Right ventricle myocardium inferior (tissue), 1 donor: ENCODE measurements at regions of chr5 and their contacts with region 1.

Region 1: DNA sequence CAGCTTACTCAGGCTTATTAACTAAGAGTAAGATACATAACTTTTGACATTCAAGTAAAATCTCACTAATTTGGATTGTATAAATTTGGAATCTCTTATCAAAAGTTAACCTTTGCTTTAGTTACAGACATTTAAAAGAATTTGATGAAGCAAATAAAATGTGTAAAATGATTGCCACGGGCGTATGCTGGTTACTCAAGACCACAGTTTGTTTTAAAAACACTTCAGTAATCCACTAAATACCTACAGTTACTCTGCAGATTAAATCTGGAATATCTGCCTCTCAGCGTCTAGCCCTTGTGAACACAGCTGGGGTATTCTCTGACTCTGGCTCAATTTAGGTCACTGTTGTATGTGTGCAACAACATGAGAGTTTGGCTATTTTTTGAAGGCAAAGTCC is 143.8 kb downstream of the MCTP1 start:
- DNase-seq: no peak
- ATAC-seq: no peak

Region 2: DNA sequence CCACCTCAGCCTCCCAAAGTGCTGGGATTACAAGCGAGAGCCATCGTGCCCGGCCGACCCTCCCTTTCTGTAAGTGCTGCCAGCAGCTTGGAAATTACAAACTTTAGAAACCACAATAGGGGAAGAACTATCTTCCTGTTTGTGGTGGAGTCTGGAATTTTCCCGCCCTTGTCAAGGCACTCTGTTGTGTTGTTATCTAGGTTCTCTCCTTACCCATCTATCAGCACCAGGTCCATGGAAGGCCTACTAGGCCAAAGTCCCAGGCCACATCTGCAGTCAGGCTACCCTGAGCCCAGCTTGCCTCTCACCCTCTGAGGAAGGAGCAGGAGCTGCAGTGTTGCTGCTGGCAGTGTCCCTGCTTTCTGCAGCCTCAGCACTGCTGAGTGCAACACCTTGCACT is 71.2 kb before region 1 on chr5:
- intact Hi-C with region 1: loop called (anchors 2 kb)
- DNase-seq: no peak
- ATAC-seq: no peak